Heart right ventricle (tissue), 16 donors: ENCODE measurements at regions of chr15 and their contacts with region 1.

Region 1: GRCh38 chr15:76185716-76186115 is 125.6 kb downstream of the ETFA start:
- DNase-seq: no peak
- ATAC-seq: peak in 2 of 8 donors; percentile 33 to 34
- H3K4me3 ChIP-seq: no peak overlapping the region
- H3K27ac ChIP-seq: no peak overlapping the region
- H3K4me1 ChIP-seq: peaks cover 0 to 5% (median 3%) of the 10 kb centered on the region in 9 donors
- H3K27me3 ChIP-seq: peaks cover 0 to 43% (median 14%) of the 10 kb centered on the region in 7 donors
- CTCF ChIP-seq: peak in 8 of 9 donors; percentile 12 to 59 (median 32)

Region 2: GRCh38 chr15:75468913-75469598 is 716.7 kb before region 1 on chr15:
- intact Hi-C with region 1: no loop called
- DNase-seq: peak in 1 of 2 donors; percentile 31
- ATAC-seq: peak in 2 of 8 donors; percentile 25 to 30
- H3K4me3 ChIP-seq: no peak overlapping the region
- H3K27ac ChIP-seq: peak overlapping the region in 1 of 10 donors; percentile 14
- H3K4me1 ChIP-seq: peaks cover 0 to 12% (median 8%) of the 10 kb centered on the region in 9 donors
- H3K27me3 ChIP-seq: no peaks in the 10 kb centered on the region
- CTCF ChIP-seq: no peak

Region 3: DNA sequence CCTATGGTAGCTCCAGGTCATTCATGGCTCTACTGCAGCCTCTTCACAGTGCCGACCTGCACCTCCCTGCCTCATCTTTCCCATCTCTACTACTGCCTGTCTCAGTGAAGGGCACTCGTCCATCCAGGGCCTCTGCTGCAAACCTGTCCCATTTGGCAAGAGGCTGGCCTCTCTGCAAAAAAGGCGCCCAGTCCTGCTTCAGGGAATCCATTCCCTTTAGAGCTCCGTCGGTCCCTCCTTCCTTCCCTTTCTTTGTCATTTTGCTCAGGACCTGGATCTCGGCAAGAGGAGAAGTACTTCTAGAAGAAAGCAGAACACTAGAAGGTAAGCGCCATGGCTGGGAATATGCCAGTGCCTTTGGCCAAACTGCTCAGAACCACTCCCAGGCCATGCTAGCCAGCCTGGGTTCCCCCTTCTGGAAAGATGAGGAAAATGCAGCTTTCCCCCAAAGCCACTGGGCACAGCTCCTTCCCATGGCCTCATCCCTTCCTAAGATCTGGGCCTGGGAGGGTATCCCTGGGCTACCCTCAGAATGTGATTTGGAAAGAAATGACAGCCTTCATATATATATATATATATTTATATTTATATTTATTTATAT is 144.5 kb after region 1 on chr15:
- intact Hi-C with region 1: loop called in 9 of 10 experiments (anchors 2 to 5 kb)
- DNase-seq: peak; percentile 38 to 56
- ATAC-seq: peak in 7 of 8 donors; percentile 60 to 77 (median 71)
- H3K4me3 ChIP-seq: no peak overlapping the region
- H3K27ac ChIP-seq: no peak overlapping the region
- H3K4me1 ChIP-seq: peaks cover 0 to 19% (median 5%) of the 10 kb centered on the region in 9 donors
- H3K27me3 ChIP-seq: peaks cover 8 to 78% (median 37%) of the 10 kb centered on the region in 7 donors
- CTCF ChIP-seq: peak; percentile 34 to 71 (median 64)

Region 4: DNA sequence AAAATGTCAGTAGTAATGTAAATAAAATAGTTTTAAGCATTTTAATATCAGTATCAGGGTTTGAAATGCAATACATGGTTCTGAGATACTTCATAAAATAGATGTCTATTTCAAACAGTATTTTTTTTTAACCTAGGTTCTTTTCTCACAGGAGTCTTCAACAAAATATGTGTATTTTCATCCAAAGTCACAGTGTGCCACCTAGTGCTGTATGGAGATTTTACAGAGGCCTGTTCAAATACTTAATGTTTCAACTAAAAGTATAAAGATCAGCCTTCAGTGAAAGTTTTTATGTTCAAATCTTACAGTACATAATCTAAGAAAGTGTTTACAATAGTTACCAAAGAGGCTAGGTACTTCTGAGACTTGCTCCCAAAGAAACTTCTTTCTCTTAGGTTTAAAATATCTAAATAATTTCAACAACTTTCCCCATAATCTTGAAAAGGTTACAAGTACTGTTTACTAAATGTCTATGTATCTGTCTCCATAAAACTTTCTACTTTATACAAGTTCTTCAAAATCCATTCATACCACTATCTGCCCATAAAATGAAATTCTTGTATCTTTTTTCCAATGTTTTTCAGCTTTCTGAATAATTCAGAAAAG is 681.1 kb after region 1 on chr15:
- intact Hi-C with region 1: loop called in 5 of 10 experiments (anchors 5 to 10 kb)
- DNase-seq: peak in 1 of 2 donors; percentile 9
- ATAC-seq: peak in 6 of 8 donors; percentile 40 to 80 (median 72)
- H3K4me3 ChIP-seq: no peak overlapping the region
- H3K27ac ChIP-seq: peak overlapping the region in 2 of 10 donors; percentile 13 to 14
- H3K4me1 ChIP-seq: peaks cover 0 to 48% (median 23%) of the 10 kb centered on the region in 9 donors
- H3K27me3 ChIP-seq: no peaks in the 10 kb centered on the region
- CTCF ChIP-seq: peak in 8 of 9 donors; percentile 8 to 64 (median 54)